Lower lobe of right lung (tissue), 2 donors: ENCODE measurements at regions of chr3 and their contacts with region 1.

Region 1: GRCh38 chr3:51501833-51502561 is 2.2 kb upstream of the DCAF1 start:
- DNase-seq: peak; percentile 84
- ATAC-seq: peak; percentile 31 to 40
- H3K4me3 ChIP-seq: no peak overlapping the region
- H3K27ac ChIP-seq: no peak overlapping the region
- H3K4me1 ChIP-seq: peaks cover 14% of the 10 kb centered on the region
- H3K27me3 ChIP-seq: no peaks in the 10 kb centered on the region
- CTCF ChIP-seq: peak; percentile 95

Region 2: GRCh38 chr3:51137715-51138114 is 364.3 kb before region 1 on chr3:
- intact Hi-C with region 1: no loop called
- DNase-seq: no peak
- ATAC-seq: no peak
- H3K4me3 ChIP-seq: no peak overlapping the region
- H3K27ac ChIP-seq: no peak overlapping the region
- H3K4me1 ChIP-seq: no peaks in the 10 kb centered on the region
- H3K27me3 ChIP-seq: no peaks in the 10 kb centered on the region
- CTCF ChIP-seq: no peak

Region 3: DNA sequence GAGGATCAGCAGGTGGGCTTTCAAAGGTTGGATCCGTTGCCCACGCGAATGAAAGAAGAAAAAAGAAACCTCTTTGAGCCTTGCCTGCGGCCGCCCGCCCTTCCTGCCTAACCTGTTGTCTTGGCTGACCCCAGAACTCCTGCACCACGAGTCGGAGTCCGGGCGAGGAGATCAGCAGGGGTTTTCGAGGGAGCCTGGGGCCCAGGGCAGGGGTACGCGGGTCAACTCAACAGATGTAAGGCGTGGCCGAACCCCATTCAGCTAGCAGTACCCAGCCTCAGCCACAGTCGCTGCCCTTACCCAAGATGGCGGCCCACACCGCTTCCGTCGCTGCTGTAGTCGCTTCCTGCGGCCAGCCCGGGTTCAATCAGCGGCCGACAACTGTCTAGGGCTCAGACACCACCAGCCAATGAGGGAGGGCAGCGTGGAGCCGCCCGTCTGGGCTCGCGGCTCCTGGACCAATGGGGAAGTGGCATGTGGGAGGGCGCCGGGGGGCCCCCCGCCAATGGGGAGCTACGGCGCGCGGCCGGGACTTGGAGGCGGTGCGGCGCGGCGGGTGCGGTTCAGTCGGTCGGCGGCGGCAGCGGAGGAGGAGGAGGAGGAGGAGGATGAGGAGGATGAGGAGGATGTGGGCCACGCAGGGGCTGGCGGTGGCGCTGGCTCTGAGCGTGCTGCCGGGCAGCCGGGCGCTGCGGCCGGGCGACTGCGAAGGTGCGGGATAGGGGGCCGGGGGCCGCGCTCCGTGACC is 117.1 kb before region 1 on chr3 and contains the start of gene MANF:
- intact Hi-C with region 1: no loop called
- DNase-seq: peak; percentile 99
- ATAC-seq: peak; percentile 98 to 99
- H3K4me3 ChIP-seq: peak within 1 kb of the TSS; percentile 76
- H3K27ac ChIP-seq: peak within 1 kb of the TSS; percentile 92
- H3K4me1 ChIP-seq: peaks cover 54% of the 10 kb centered on the region
- H3K27me3 ChIP-seq: no peaks in the 10 kb centered on the region
- CTCF ChIP-seq: no peak
- total RNA-seq, gene MANF: 59.8 TPM

Region 4: GRCh38 chr3:51568036-51568435 is 66.0 kb after region 1 on chr3:
- intact Hi-C with region 1: no loop called
- DNase-seq: no peak
- ATAC-seq: peak; percentile 37 to 61
- H3K4me3 ChIP-seq: no peak overlapping the region
- H3K27ac ChIP-seq: no peak overlapping the region
- H3K4me1 ChIP-seq: peaks cover 24% of the 10 kb centered on the region
- H3K27me3 ChIP-seq: no peaks in the 10 kb centered on the region
- CTCF ChIP-seq: no peak

Region 5: DNA sequence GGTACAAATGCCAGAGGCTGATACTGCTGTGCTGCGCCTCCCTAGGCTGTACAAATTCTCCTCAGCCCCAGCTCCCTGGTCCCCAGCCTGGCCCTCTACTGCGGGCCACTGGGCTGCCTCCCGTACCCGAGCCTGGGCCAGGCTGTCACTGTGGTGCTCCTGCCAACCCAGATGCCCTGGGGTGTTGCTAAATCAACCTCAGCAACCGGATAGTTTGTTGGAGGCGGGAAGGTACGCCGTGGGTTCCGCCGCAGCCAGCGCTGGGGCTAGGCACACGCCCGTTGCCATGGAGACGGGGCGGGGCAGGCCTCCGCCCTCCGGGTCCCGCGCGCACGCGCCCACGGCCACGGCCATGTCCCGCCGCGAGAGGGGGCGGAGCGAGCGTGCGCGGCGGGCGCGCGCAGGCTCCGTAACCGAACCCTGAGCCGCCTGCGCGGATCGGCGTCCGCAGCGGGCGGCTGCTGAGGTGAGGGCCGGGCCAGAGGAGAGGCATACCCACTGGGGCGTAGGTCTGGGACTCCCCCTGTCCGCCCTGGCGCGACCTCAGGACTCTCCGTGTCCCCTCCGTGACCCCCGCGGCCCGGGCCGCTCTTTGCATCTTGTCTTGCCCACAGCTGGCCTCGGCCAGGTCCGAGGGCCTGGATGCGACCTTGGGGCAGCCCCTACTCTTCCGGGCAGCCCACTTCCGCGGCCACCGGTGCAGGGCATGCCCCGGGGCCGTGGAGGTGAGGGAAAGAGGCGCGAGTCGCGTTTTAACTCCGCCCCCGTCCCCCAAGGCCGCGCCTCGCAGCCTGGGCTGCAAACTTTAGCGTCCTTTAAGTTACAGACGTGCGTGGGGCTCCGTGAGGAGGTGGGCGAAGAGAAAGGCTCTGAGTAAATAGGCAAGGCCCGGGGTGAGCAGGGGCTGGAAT is 169.1 kb after region 1 on chr3 and contains the start of gene TEX264:
- intact Hi-C with region 1: loop called (anchors 5 kb)
- DNase-seq: peak; percentile 95
- ATAC-seq: peak; percentile 95 to 96
- H3K4me3 ChIP-seq: peak within 1 kb of the TSS; percentile 95
- H3K27ac ChIP-seq: peak within 1 kb of the TSS; percentile 95
- H3K4me1 ChIP-seq: peaks cover 50% of the 10 kb centered on the region
- H3K27me3 ChIP-seq: no peaks in the 10 kb centered on the region
- CTCF ChIP-seq: no peak
- total RNA-seq, gene TEX264: 43.5 TPM